Heart left ventricle (tissue), 16 donors: ENCODE measurements at regions of chr16 and their contacts with region 1.

Region 1: GRCh38 chr16:12455287-12455798 is 348.3 kb downstream of the CPPED1 start:
- DNase-seq: peak; percentile 50 to 75 (median 59)
- ATAC-seq: peak; percentile 54 to 86 (median 84)
- H3K4me3 ChIP-seq: no peak overlapping the region
- H3K27ac ChIP-seq: no peak overlapping the region
- H3K4me1 ChIP-seq: peaks cover 0 to 20% (median 0%) of the 10 kb centered on the region in 12 donors
- H3K27me3 ChIP-seq: no peaks in the 10 kb centered on the region
- CTCF ChIP-seq: peak; percentile 73 to 91 (median 85)
- POLR2A ChIP-seq: no peak

Region 2: DNA sequence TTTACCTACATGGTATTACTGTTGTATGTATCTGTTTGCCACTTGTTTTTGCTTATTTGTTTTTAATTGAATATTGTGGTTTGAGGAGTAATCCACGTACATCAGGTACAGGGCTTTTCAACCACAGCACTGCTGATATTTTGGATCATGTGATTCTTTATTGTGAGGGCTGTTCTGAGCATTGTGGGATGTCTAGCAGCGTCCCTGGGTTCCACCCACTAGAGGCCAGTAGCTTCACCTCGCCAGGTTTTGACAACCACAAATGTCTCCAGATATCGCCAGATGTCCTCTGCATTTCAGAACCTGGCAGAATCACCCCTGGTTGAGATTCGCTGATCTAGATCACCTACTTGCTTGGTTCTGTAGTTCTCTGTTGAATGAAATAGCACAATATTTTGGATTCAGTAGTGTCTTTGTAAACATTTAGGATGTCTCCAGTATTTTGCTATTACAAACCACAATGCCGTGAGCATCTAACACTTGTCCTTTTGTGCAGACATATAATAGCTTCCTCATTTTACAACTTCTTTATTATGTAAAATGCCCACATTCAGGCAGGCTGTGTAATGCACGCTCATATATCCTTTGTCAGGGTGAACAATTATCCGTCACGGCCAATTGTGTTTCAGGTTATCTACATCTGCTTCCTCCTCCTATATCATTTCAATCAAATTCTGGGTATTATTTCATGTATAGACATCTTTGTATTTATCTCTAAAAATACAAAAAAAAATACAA is 98.6 kb before region 1 on chr16:
- intact Hi-C with region 1: no loop called
- DNase-seq: no peak
- ATAC-seq: no peak
- H3K4me3 ChIP-seq: no peak overlapping the region
- H3K27ac ChIP-seq: no peak overlapping the region
- H3K4me1 ChIP-seq: peaks cover 0 to 3% (median 0%) of the 10 kb centered on the region in 12 donors
- H3K27me3 ChIP-seq: no peaks in the 10 kb centered on the region
- CTCF ChIP-seq: no peak
- POLR2A ChIP-seq: no peak

Region 3: DNA sequence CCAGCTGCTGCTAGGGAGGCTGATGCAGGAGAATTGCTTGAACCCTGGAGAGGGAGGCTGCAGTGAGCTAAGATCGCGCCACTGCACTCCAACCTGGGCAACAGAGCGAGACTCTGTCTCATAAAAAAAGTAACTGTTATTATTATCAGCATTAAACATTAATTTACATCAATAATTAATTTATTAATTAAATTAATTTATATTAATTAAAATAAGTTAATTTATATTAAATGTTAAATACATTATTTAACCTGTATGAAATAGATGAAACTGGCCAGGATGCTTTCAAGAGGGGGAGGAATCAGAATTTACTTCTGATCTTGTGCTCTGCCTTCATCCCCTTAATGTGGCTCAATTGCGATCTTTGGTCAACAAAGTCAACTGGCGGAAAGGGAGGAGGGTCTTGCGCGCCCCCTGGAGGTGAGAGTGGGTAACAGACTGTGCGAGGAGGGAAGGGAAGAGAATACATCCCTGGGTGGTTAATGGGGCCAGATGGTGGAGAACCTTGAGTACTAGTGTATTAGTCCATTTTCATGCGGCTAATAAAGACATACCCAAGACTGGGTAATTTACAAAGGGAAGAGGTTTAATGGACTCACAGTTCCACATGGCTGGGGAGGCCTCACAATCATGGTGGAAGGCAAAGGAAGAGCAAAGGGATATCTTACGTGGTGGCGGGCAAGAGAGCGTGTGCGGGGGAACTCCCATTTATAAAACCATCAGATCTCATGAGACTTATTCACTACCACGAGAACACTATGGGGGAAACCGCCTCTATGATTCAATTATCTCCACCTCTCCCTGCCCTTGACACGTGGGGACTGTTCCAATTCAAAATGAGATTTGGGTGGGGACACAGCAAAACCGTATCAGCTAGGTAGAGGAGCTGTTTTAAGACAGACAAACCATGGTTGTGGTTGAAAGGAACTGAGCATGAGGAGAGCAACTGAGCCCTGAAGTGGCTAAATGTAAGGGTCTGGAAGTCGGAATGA is 364.1 kb after region 1 on chr16:
- intact Hi-C with region 1: loop called (anchors 1 to 10 kb)
- DNase-seq: peak; percentile 47 to 81 (median 58)
- ATAC-seq: peak in 3 of 4 donors; percentile 59 to 69 (median 69)
- H3K4me3 ChIP-seq: no peak overlapping the region
- H3K27ac ChIP-seq: no peak overlapping the region
- H3K4me1 ChIP-seq: peaks cover 0 to 21% (median 0%) of the 10 kb centered on the region in 12 donors
- H3K27me3 ChIP-seq: peaks cover 0 to 5% (median 0%) of the 10 kb centered on the region in 9 donors
- CTCF ChIP-seq: peak; percentile 70 to 89 (median 80)
- POLR2A ChIP-seq: no peak

Region 4: GRCh38 chr16:12907670-12908233 is 452.4 kb after region 1 on chr16:
- intact Hi-C with region 1: loop called in 1 of 10 experiments (anchors 5 kb)
- DNase-seq: no peak
- ATAC-seq: no peak
- H3K4me3 ChIP-seq: no peak overlapping the region
- H3K27ac ChIP-seq: no peak overlapping the region
- H3K4me1 ChIP-seq: peaks cover 0 to 15% (median 0%) of the 10 kb centered on the region in 12 donors
- H3K27me3 ChIP-seq: peaks cover 8 to 50% (median 34%) of the 10 kb centered on the region in 9 donors
- CTCF ChIP-seq: no peak
- POLR2A ChIP-seq: no peak

Region 5: GRCh38 chr16:13453938-13454553 is 998.7 kb after region 1 on chr16:
- intact Hi-C with region 1: loop called in 2 of 10 experiments (anchors 10 kb)
- DNase-seq: no peak
- ATAC-seq: no peak
- H3K4me3 ChIP-seq: no peak overlapping the region
- H3K27ac ChIP-seq: no peak overlapping the region
- H3K4me1 ChIP-seq: no peaks in the 10 kb centered on the region
- H3K27me3 ChIP-seq: peaks cover 0 to 12% (median 0%) of the 10 kb centered on the region in 9 donors
- CTCF ChIP-seq: peak in 11 of 12 donors; percentile 19 to 53 (median 33)
- POLR2A ChIP-seq: no peak